ENCODE measurements at regions of chr1 and their contacts with region 1.

Region 1: DNA sequence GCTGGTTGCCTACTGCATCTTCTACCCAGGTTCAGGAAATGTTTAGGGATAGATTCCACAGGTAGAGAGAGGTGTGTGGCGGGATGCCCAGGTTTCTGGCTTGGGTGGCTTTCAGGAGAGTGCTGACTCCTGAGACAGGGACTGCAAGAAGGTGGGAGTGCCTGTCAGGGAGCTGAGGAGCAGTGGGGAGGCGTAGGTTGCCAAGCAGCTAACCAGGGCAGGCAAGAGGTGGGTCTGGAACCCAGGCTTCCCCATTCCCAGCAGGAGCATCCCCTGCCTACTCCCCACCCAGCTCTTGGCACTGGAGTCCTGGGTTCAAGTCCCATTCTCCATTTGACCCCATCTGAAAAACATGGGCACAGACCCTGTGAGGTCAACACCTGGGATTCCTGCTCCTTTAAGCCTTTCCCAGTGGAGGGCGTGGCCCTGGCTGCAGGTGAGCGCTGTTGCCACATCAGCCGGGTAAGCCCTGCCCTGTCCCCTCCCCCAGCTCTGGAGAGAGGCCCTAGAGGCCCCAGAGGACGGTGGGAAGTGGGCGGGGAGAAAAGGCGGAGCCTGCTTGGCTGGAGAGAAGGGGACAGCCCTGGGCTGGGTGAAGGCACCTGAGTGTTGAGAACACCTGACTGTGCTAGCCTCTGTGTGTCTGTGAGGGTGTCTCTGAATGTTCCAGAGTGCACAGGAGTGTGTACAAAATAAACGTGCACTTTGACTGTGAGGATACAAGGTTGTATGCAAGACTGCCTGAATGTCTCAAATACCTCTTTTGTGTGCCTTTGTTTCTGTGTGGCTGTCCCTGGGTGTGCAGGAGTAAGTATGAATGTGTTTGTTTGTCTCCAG is 14.0 kb upstream of the SYNC start:
- DNase-seq: peak; percentile 73
- H3K4me3 Mint-ChIP-seq: no peak overlapping the region
- H3K27ac Mint-ChIP-seq: no peak overlapping the region
- H3K4me1 Mint-ChIP-seq: peaks cover 14% of the 10 kb centered on the region
- H3K27me3 Mint-ChIP-seq: peaks cover 6% of the 10 kb centered on the region

Region 2: GRCh38 chr1:32521165-32521564 is 195.4 kb before region 1 on chr1:
- CTCF ChIA-PET with region 1: interaction called, 22 read pairs
- POLR2A ChIA-PET with region 1: no interaction called
- DNase-seq: no peak
- H3K4me3 Mint-ChIP-seq: peak overlapping the region; percentile 61
- H3K27ac Mint-ChIP-seq: no peak overlapping the region
- H3K4me1 Mint-ChIP-seq: peaks cover 8% of the 10 kb centered on the region
- H3K27me3 Mint-ChIP-seq: peaks cover under 1% of the 10 kb centered on the region

Region 3: GRCh38 chr1:32773018-32773763 is 56.7 kb after region 1 on chr1:
- CTCF ChIA-PET with region 1: interaction called, 157 read pairs
- POLR2A ChIA-PET with region 1: interaction called, 15 read pairs
- DNase-seq: peak; percentile 78
- H3K4me3 Mint-ChIP-seq: no peak overlapping the region
- H3K27ac Mint-ChIP-seq: peak overlapping the region; percentile 15
- H3K4me1 Mint-ChIP-seq: peaks cover 15% of the 10 kb centered on the region
- H3K27me3 Mint-ChIP-seq: no peaks in the 10 kb centered on the region

Region 4: DNA sequence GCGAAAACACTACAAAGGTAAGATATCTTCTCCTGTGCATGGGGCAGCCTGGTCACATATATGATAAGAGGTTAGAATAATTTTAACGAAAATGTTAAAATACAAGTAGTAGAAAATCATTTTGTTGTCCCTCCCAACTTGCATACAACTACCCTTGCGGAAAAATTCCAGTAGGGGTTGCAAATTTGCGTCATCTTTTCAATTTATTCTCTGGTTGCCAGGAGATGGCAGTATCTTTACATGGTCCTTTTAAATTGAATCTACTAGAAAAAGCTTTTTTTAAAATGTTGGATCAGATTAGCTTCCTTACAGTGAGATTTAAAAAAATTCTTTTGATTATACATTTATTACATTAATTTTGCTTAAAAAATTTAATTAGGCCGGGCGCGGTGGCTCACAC is 111.8 kb after region 1 on chr1:
- CTCF ChIA-PET with region 1: interaction called, 11 read pairs
- POLR2A ChIA-PET with region 1: no interaction called
- DNase-seq: no peak
- H3K4me3 Mint-ChIP-seq: no peak overlapping the region
- H3K27ac Mint-ChIP-seq: no peak overlapping the region
- H3K4me1 Mint-ChIP-seq: peaks cover 14% of the 10 kb centered on the region
- H3K27me3 Mint-ChIP-seq: no peaks in the 10 kb centered on the region

Region 5: DNA sequence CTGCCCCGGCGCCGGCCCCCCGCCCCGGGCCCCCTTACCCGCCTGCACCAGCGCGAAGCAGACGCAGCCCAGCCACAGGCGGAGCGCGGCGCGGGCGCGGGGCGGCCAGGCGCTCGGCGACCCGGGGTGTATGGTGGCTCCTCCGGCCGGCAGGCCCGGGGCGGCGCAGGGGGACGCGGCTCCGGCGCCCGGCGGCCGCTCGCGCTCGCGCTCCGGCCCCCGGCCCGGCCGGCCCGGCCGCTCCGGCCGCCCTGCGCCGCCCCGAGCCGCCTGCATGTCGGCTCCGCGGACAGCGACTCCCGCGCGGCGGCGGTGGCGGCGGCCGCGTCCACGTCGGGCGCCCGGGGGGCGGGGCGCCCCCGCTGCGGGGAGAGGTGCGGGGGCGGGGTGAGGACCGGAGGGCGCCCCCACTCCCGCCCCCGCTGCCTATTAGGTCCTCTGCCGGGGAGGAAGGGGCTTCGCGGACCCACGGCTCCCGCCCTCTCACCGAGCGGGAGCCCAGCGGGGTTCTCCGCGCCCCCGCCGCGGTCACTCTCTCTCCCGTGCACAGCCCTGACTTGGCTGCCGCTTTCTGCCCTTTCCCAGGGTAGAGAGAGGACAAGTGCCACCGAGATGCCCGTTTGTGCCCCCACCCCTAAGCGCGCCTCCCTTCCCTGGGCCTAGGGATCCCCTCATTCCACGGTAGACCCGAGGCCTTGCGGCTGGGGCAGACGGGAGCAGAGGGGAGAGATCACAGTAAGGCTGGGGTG is 154.3 kb after region 1 on chr1 and contains the start of gene FNDC5:
- CTCF ChIA-PET with region 1: interaction called, 32 read pairs
- POLR2A ChIA-PET with region 1: no interaction called
- DNase-seq: no peak
- H3K4me3 Mint-ChIP-seq: no peak within 1 kb of the TSS
- H3K27ac Mint-ChIP-seq: no peak within 1 kb of the TSS
- H3K4me1 Mint-ChIP-seq: peaks cover 18% of the 10 kb centered on the region
- H3K27me3 Mint-ChIP-seq: peaks cover 48% of the 10 kb centered on the region
- total RNA-seq, gene FNDC5: not detected

Region 6: DNA sequence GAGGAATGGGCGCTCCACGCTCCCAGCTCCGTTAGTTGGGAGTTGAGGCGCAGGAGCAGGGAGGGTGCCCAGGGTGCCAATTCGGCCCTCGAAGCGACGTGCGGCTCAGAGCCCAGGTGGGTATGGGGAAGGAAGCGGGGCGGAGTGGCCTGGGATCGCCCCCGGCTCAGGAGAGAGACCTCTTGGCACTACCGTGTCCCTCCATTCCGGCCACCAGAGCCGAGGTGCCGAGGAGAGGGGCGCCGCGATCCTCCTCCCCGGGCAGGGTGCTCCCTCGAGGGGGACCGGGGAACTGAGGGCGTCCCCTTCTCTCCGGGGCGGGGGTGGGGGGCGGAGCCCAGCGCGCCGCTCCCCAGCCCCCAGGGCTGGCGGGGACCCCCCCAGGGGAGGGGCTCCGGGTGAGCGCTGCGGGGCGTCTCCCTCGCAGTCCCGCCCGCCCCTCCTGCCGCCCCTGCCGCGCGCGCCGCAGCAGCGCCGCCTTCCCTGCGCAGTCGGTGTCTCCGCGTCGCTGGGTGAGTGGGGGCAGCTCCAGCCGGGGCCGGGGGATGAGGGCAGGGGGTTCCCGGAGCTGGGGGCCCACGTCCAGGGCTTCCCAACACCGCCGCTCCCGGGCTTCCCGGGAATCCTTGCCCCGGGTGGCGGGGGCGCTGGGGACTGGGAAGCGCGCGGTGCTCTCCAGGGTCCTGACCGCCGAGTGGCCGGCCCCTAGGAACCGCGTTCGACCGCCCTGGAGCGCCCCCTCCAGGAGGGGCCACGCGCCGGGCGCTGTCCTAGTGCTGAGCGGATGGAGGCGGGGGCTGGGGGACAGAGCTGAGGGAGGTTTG is 169.7 kb after region 1 on chr1 and contains the start of gene HPCA:
- CTCF ChIA-PET with region 1: no interaction called
- POLR2A ChIA-PET with region 1: no interaction called
- DNase-seq: peak; percentile 56
- H3K4me3 Mint-ChIP-seq: no peak within 1 kb of the TSS
- H3K27ac Mint-ChIP-seq: no peak within 1 kb of the TSS
- H3K4me1 Mint-ChIP-seq: peaks cover 3% of the 10 kb centered on the region
- H3K27me3 Mint-ChIP-seq: peaks cover 63% of the 10 kb centered on the region
- total RNA-seq, gene HPCA: 0.38 to 0.60 TPM